WTC11 (cell line): ENCODE measurements at regions of chr17 and their contacts with region 1.

Region 1: GRCh38 chr17:57739402-57740392 is 5.4 kb downstream of the CCDC182 start:
- DNase-seq: no peak
- ATAC-seq: peak; percentile 87
- H3K4me3 Mint-ChIP-seq: no peak overlapping the region
- H3K27ac Mint-ChIP-seq: no peak overlapping the region
- H3K4me1 Mint-ChIP-seq: no peaks in the 10 kb centered on the region
- H3K27me3 Mint-ChIP-seq: no peaks in the 10 kb centered on the region
- CTCF ChIP-seq: no peak

Region 2: GRCh38 chr17:57130761-57131461 is 608.8 kb before region 1 on chr17:
- CTCF ChIA-PET with region 1: interaction called, 25 read pairs
- POLR2A ChIA-PET with region 1: no interaction called
- DNase-seq: peak; percentile 88
- ATAC-seq: peak; percentile 76
- H3K4me3 Mint-ChIP-seq: no peak overlapping the region
- H3K27ac Mint-ChIP-seq: no peak overlapping the region
- H3K4me1 Mint-ChIP-seq: peaks cover 30% of the 10 kb centered on the region
- H3K27me3 Mint-ChIP-seq: no peaks in the 10 kb centered on the region
- CTCF ChIP-seq: peak; percentile 92

Region 3: GRCh38 chr17:57615836-57616757 is 123.6 kb before region 1 on chr17:
- CTCF ChIA-PET with region 1: no interaction called
- POLR2A ChIA-PET with region 1: no interaction called
- DNase-seq: no peak
- ATAC-seq: no peak
- H3K4me3 Mint-ChIP-seq: no peak overlapping the region
- H3K27ac Mint-ChIP-seq: no peak overlapping the region
- H3K4me1 Mint-ChIP-seq: peaks cover 27% of the 10 kb centered on the region
- H3K27me3 Mint-ChIP-seq: no peaks in the 10 kb centered on the region
- CTCF ChIP-seq: no peak